ENCODE measurements at regions of chr5 and their contacts with region 1.

Region 1: DNA sequence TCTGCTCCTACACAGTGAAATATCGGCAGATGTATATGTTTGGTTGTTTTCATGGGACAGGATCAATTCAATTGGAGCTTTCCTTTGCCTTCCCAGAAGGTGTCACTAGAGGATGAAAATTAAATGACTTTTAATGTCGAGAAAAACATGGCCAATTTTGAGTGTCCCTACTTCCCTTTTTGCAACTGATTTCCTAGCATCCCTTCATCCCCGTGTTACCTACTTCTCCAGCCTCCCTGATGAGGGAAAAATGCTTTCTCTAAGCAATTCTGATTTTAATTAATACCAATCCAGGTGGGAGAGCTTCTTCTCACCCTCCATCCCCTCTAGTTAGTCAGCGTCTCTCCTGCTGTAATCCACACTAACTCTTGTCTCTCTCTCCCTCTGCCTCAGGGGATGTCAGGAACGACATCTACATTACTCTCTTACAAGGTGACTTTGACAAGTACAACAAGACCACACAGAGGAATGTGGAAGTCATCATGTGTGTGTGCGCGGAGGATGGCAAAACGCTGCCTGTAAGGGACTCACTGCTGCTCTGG is 64.9 kb downstream of the DOCK2 start:
- DNase-seq: no peak
- H3K4me3 ChIP-seq: no peak overlapping the region
- H3K27ac ChIP-seq: no peak overlapping the region
- H3K4me1 ChIP-seq: no peaks in the 10 kb centered on the region
- H3K27me3 ChIP-seq: peaks cover 12% of the 10 kb centered on the region
- CTCF ChIP-seq: peak; percentile 66

Region 2: DNA sequence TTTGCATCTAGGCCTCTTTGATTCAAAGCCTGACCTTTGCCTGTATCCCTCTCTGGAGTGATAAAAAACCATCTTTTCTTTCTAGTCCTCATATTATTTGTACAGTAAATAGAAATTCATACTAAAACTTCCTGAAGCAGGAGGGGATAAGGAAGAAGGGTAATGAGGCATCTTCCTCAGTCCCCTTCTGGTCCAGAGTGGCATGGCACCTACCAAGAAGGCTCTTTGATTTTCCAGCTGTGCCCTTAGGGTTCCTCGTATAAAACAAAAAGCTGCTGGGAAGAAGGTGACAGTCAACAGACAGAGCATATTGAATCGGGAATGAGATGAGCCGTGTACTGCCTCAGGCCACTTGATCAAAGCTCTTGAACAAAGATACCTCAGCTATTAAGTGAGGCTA is 190.3 kb before region 1 on chr5:
- intact Hi-C with region 1: no loop called
- DNase-seq: no peak
- H3K4me3 ChIP-seq: no peak overlapping the region
- H3K27ac ChIP-seq: no peak overlapping the region
- H3K4me1 ChIP-seq: no peaks in the 10 kb centered on the region
- H3K27me3 ChIP-seq: no peaks in the 10 kb centered on the region
- CTCF ChIP-seq: no peak

Region 3: DNA sequence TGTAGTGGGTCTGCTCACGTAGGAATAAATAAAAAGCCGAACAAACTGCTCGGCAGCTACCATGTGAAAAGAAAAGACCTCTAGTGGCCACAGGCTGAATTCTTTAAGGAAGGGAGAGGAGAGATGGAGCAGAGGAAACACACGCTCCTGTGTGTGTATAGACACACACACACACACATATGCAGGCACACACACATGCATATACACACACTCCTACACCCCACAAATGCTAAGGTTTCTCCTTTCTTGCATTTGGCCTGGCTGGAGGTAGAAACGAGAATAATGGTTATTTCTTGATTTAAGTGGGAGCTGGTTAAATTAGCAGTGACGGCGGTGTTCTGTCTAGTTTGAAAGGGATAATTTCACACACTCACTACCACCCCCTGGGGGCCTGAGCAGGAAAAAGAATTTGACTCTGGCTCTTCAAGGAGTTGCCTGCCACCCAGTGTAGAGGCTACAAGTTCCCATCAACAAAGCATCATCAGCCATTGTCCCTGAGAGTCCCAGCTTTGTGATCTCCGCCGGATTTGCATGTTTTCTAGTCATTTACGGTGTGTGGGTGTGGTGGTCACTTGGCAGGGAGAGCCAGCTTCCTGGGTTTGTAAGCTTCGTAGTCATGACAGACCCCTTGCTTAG is 278.6 kb after region 1 on chr5 and contains the start of gene INSYN2B:
- intact Hi-C with region 1: loop called (anchors 10 kb)
- DNase-seq: peak; percentile 51
- H3K4me3 ChIP-seq: peak within 1 kb of the TSS; percentile 48
- H3K27ac ChIP-seq: no peak within 1 kb of the TSS
- H3K4me1 ChIP-seq: peaks cover 20% of the 10 kb centered on the region
- H3K27me3 ChIP-seq: peaks cover 75% of the 10 kb centered on the region
- CTCF ChIP-seq: peak; percentile 71
- total RNA-seq, gene INSYN2B: 0.08 TPM